PC-9 (cell line): ENCODE measurements at regions of chr7 and their contacts with region 1.

Region 1: GRCh38 chr7:2529161-2530070 is 9.8 kb downstream of the LFNG start:
- DNase-seq: peak; percentile 71 to 86
- H3K4me3 ChIP-seq: no peak overlapping the region; the same call in 1 of the 2 replicates
- H3K27ac ChIP-seq: peak overlapping the region; percentile 64
- H3K4me1 ChIP-seq: peaks cover 72% of the 10 kb centered on the region
- H3K27me3 ChIP-seq: no peaks in the 10 kb centered on the region
- CTCF ChIP-seq: no peak

Region 2: GRCh38 chr7:1532483-1533424 is 996.7 kb before region 1 on chr7:
- CTCF ChIA-PET with region 1: no interaction called
- POLR2A ChIA-PET with region 1: no interaction called
- intact Hi-C with region 1: loop called (anchors 10 kb)
- DNase-seq: peak; percentile 88 to 97
- H3K4me3 ChIP-seq: peak overlapping the region; percentile 64
- H3K27ac ChIP-seq: peak overlapping the region; percentile 89
- H3K4me1 ChIP-seq: peaks cover 52% of the 10 kb centered on the region
- H3K27me3 ChIP-seq: no peaks in the 10 kb centered on the region
- CTCF ChIP-seq: no peak

Region 3: DNA sequence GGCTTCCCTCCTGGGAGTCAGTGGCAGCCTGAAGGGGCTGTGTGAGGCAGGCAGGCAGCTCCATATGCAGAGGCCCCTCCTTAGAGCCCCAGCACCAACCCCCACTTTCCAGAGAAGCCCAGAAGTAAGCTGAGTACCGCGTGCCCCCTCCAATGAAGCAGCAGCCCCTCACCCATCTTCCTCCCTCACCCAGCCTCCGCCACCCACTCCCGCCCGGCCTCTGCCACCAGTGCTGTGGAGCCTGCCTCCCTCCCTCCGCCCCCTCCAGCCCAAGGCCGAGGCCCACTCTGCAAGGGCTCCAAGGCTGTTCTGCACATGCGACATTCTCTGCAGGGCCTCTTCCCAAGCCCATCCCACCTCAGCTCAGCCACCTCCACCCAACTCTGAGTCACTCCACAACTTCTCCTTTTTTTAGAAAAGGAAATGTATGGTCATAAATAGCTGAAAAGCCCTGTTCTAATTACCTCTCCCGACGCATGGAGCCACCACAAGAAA is 510.8 kb before region 1 on chr7:
- CTCF ChIA-PET with region 1: interaction called, 11 read pairs
- POLR2A ChIA-PET with region 1: no interaction called
- intact Hi-C with region 1: no loop called
- DNase-seq: peak in 1 of 2 experiments; percentile 45
- H3K4me3 ChIP-seq: no peak overlapping the region
- H3K27ac ChIP-seq: no peak overlapping the region
- H3K4me1 ChIP-seq: 0 out of 2 replicates have a peak, but pooled peaks cover 3% of the 10 kb centered on the region
- H3K27me3 ChIP-seq: no peaks in the 10 kb centered on the region
- CTCF ChIP-seq: no peak

Region 4: DNA sequence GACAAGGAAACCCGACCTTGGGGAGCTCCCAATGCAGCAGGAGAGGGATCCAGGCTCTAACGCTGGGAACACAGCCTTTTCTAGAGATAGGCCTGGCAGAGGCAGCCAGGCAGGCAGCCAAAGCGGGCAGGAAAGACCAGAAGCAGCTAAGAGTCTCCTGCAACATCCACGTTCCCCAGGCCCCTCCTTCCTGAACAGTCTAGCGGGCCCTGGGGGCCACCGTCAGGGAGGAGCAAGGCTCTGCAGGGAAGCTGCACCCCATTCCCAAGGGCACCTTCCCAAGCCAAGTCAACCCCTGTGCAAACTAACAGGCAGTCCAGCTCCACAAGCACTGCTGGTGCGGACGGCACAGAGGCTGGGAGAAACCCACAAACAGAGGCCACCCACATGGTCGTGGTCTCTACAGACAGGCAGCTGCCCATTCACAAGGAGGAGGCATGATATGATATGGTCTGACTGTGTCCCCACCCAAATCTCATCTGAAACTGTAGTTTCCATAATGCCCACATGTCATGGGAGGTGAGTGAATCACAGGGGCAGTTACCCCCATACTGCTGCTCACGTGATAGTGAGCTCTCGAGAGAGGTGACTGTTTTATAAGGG is 412.3 kb before region 1 on chr7:
- CTCF ChIA-PET with region 1: no interaction called
- POLR2A ChIA-PET with region 1: no interaction called
- intact Hi-C with region 1: no loop called
- DNase-seq: no peak
- H3K4me3 ChIP-seq: no peak overlapping the region
- H3K27ac ChIP-seq: no peak overlapping the region
- H3K4me1 ChIP-seq: no peaks in the 10 kb centered on the region
- H3K27me3 ChIP-seq: no peaks in the 10 kb centered on the region
- CTCF ChIP-seq: no peak

Region 5: GRCh38 chr7:2224934-2225333 is 304.5 kb before region 1 on chr7:
- CTCF ChIA-PET with region 1: no interaction called
- POLR2A ChIA-PET with region 1: no interaction called
- intact Hi-C with region 1: loop called (anchors 10 kb)
- DNase-seq: peak; percentile 65 to 83
- H3K4me3 ChIP-seq: no peak overlapping the region
- H3K27ac ChIP-seq: no peak overlapping the region
- H3K4me1 ChIP-seq: no peaks in the 10 kb centered on the region
- H3K27me3 ChIP-seq: no peaks in the 10 kb centered on the region
- CTCF ChIP-seq: no peak

Region 6: DNA sequence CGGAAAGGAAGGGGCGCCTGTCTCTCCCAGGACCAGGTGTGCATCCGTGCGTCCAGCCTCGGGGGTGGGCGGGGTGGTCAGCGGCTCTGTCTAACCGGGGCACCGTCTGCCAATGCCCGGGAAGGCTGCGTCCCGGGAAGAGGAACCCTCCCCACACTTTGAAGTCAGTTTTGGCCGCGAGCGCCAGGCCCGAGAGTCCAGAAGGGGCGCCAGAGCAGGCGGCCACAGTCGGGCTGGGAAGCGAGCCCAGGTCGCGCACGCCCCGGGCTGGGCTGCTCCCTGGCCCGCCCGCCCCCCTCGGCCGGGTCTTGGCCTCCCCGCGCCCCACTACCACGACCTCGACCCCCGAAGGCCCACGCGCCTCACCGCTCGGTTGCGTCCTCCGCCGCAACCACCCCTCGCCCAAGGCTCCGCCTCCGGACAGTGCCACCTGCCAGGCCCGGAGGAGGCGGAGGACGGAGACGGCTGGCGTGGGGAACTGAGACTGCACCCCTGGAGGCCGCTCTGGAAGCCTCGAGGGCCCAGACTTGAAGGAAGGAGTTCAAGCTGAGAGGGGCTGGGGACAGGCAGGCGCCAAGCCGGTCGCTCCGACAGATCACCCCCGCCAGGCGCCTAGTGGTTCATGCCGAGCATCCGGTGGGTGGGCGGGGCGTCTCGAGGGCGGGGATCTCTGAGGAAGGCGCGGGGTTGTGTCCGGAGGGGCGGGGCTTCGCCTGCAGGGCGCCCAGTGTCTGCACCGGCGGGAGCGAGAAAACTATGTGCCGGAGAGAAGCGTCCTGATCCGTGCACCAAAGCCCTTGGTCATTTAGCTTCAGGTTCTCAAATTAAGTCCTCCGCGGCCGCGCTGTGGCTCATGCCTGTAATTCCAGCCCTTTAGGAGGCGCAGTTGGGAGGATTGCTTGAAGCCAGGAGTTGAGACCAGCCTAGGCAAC is 26.0 kb after region 1 on chr7 and contains the start of gene BRAT1:
- CTCF ChIA-PET with region 1: interaction called, 11 read pairs
- POLR2A ChIA-PET with region 1: no interaction called
- intact Hi-C with region 1: loop called (anchors 2 kb)
- DNase-seq: peak; percentile 95 to 98
- H3K4me3 ChIP-seq: peak within 1 kb of the TSS; percentile 86
- H3K27ac ChIP-seq: peak within 1 kb of the TSS; percentile 87
- H3K4me1 ChIP-seq: peaks cover 36% of the 10 kb centered on the region
- H3K27me3 ChIP-seq: no peaks in the 10 kb centered on the region
- CTCF ChIP-seq: peak; percentile 47
- total RNA-seq, gene BRAT1: 53.9 and 57.7 TPM in 2 replicates

Region 7: DNA sequence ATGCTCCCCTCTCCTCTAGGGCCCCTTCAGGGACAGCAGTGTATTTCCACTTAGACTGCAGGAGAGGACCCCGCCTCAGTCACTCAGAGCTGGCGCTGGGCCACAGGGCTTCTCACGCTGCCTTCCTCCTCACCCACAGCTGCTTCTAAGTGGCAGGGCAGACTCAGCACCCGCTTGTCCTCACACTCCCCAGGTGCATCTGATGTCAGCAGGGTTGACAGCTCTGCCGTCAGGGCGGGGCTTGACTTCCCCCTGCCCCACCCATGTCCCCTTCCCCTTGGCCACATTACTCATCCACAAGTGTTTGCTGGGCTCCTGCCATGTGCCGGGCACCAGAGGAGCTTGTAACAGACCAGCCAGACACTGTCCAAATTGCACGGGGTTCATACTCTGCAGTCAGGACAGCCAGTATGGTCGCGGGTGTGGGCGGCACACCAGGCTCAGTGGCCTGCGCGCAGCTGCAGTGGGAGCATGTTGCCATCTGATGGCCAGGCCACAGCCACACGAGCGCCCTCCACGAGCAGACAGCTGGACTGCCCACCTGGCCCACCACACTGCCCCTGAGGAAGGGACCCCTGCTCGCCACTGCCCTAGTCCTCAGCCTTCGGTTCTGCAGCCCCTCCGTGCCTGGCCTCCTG is 73.1 kb after region 1 on chr7:
- CTCF ChIA-PET with region 1: interaction called, 11 read pairs
- POLR2A ChIA-PET with region 1: no interaction called
- intact Hi-C with region 1: no loop called
- DNase-seq: peak in 1 of 2 experiments; percentile 22
- H3K4me3 ChIP-seq: no peak overlapping the region
- H3K27ac ChIP-seq: no peak overlapping the region
- H3K4me1 ChIP-seq: no peaks in the 10 kb centered on the region; the same call in 1 of the 2 replicates
- H3K27me3 ChIP-seq: no peaks in the 10 kb centered on the region
- CTCF ChIP-seq: no peak